HepG2 (cell line): ENCODE measurements at regions of chr3 and their contacts with region 1.

Region 1: DNA sequence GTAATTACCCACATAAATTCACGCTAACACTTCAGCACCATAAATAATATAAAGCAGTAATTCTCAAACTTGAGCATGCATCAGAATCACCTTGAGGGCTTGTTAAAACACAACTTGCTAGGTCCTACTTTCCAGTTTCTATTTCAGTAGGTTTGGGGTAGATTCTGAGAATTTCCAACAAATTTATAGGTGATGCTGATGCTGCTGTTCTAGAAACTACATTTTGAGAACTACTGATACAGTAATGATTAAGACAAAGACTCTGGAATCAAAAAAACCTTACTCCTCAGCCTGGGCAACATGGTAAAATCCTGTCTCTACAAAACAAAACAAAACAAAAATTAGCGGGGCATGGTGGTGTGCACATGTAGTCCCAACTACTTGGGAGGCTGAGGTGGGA is 18.8 kb downstream of the TMEM39A start:
- DNase-seq: no peak
- ATAC-seq: no peak
- H3K4me3 ChIP-seq: no peak overlapping the region
- H3K27ac ChIP-seq: no peak overlapping the region
- H3K4me1 ChIP-seq: no peaks in the 10 kb centered on the region
- H3K27me3 ChIP-seq: no peaks in the 10 kb centered on the region
- CTCF ChIP-seq: no peak
- EP300 ChIP-seq: no peak
- POLR2A ChIP-seq: no peak
- RAD21 ChIP-seq: no peak

Region 2: DNA sequence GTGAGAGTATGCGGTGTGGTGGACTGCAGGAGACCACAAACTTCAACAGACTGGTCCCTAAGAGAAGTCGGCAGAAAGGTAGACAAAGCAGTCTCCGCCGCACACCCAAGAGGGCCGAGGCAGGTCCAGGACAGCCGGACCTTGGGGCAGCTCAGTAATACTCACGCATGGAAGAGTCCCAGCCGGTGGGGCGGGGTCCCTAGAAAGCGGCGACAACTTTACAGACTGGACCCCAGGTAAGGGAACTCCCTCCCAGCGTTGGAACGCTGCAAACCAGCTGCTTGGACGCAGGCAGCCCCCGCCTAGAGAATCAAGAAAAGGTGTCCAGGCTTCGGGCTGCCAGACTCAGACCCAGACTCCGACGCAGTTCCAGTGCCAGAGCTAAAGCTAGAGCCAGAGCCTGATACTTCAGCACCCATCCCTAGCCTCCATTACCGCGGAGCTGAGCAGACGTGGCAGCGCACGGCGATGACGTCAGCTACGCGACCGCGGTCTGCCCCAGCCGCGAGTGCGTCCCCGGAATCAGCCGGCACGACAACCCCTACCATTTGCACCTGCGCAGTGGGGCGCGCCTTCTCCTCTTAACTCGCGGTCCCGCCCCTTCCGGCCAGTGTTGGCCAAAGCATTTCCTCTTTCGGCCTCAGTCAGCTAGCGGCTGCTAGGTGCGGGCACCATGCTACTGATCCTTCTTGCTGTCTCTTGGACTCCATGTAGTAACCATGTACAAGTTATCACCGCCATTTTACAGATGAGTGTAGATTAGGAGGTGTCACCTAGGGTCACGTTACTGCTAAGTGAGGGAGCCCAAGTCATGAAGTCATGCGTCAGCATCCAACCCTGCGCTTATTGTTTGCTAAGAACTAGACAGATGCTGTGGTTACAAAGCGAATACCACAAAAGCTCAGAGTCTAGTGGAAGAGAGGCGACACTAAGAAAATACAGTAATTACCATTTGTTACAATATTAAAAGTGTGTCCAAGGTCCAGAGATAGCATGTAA is 18.9 kb after region 1 on chr3 and contains the start of gene TMEM39A:
- CTCF ChIA-PET with region 1: no interaction called
- POLR2A ChIA-PET with region 1: interaction called, 3 read pairs
- in situ Hi-C with region 1: no loop called
- intact Hi-C with region 1: loop called (anchors 1 kb)
- DNase-seq: peak; percentile 97
- ATAC-seq: peak; percentile 98
- H3K4me3 ChIP-seq: peak within 1 kb of the TSS; percentile 89 to 97 (median 93)
- H3K27ac ChIP-seq: peak within 1 kb of the TSS; percentile 90
- H3K4me1 ChIP-seq: peaks cover 42% of the 10 kb centered on the region
- H3K27me3 ChIP-seq: no peaks in the 10 kb centered on the region; a peak in 1 of 5 replicates
- CTCF ChIP-seq: no peak
- EP300 ChIP-seq: no peak
- POLR2A ChIP-seq: peak; percentile 98 to 99
- RAD21 ChIP-seq: no peak; the same call in 1 of the 2 replicates
- total RNA-seq, gene TMEM39A: 32.9 and 55.8 TPM in 2 replicates

Region 3: GRCh38 chr3:119676771-119677640 is 232.4 kb after region 1 on chr3 and contains the start of gene COX17:
- CTCF ChIA-PET with region 1: no interaction called
- POLR2A ChIA-PET with region 1: no interaction called
- in situ Hi-C with region 1: no loop called
- intact Hi-C with region 1: no loop called
- DNase-seq: peak; percentile 97
- ATAC-seq: peak; percentile 95
- H3K4me3 ChIP-seq: peak within 1 kb of the TSS; percentile 69 to 96 (median 77)
- H3K27ac ChIP-seq: peak within 1 kb of the TSS; percentile 84
- H3K4me1 ChIP-seq: peaks cover 16% of the 10 kb centered on the region
- H3K27me3 ChIP-seq: no peaks in the 10 kb centered on the region; a peak in 1 of 5 replicates
- CTCF ChIP-seq: no peak
- EP300 ChIP-seq: no peak
- POLR2A ChIP-seq: peak; percentile 61
- RAD21 ChIP-seq: no peak; the same call in 1 of the 2 replicates
- total RNA-seq, gene COX17: 51.0 and 66.2 TPM in 2 replicates